Mammary epithelial cell (primary cell): ENCODE measurements at regions of chr11 and their contacts with region 1.

Region 1: GRCh38 chr11:131025020-131025419 is 108.7 kb upstream of the SNX19 start:
- DNase-seq: peak; percentile 49
- H3K4me3 ChIP-seq: no peak overlapping the region
- H3K27ac ChIP-seq: no peak overlapping the region
- H3K4me1 ChIP-seq: peaks cover 3% of the 10 kb centered on the region
- H3K27me3 ChIP-seq: no peaks in the 10 kb centered on the region
- CTCF ChIP-seq: peak; percentile 84 to 88

Region 2: GRCh38 chr11:131511794-131512193 is 486.8 kb after region 1 on chr11:
- CTCF ChIA-PET with region 1: no interaction called
- dilution Hi-C with region 1: no loop called
- in situ Hi-C with region 1: no loop called
- intact Hi-C with region 1: loop called (anchors 5 kb)
- DNase-seq: no peak
- H3K4me3 ChIP-seq: no peak overlapping the region
- H3K27ac ChIP-seq: no peak overlapping the region
- H3K4me1 ChIP-seq: no peaks in the 10 kb centered on the region
- H3K27me3 ChIP-seq: no peaks in the 10 kb centered on the region
- CTCF ChIP-seq: peak; percentile 34 to 61

Region 3: DNA sequence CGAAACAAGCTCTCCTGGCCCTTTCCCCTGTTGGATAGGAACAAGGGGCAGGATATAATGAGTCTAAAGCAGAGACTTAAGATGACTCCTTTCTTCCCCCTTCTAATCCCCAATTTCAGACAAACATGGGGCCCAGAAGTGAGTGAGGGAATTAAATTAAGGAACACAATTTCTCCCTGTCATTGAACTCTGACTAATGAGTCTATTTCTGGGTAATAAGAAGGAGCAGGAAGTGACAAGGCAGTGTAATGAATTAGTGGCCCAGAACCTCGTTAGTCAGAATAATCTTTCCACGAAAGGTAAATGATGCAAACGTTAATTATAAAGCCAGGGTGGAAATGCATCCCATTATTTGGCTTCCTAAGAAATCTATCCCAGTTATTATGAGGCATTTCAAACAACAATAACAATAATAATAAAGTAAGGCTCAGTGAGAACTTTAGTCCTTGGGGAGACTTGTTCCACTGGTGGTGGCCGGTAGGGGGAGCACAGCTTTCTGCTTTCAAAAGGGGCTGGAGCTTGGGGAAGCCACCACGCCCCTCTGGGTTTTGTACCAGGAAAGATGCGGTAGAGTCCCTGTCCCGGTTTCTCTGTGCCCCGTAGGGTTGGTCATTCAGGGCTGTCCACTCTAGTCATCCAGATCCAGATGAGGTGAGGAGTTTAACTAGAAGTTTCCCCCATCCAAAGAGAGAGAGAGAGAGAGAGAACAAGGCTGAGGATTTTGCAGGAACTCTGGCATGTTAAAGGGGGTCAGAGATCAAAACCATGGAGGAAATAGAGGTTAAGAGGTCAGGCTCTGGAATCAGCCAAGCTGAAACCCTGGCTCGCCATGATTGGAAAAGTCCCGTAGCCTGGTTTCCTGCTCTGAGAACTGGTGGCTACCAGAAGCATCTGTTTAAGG is 643.7 kb after region 1 on chr11:
- CTCF ChIA-PET with region 1: no interaction called
- dilution Hi-C with region 1: no loop called
- in situ Hi-C with region 1: no loop called
- intact Hi-C with region 1: loop called (anchors 1 kb)
- DNase-seq: peak; percentile 20
- H3K4me3 ChIP-seq: no peak overlapping the region
- H3K27ac ChIP-seq: no peak overlapping the region
- H3K4me1 ChIP-seq: no peaks in the 10 kb centered on the region
- H3K27me3 ChIP-seq: no peaks in the 10 kb centered on the region
- CTCF ChIP-seq: peak; percentile 56 to 59